Heart right ventricle (tissue), 16 donors: ENCODE measurements at regions of chr11 and their contacts with region 1.

Region 1: DNA sequence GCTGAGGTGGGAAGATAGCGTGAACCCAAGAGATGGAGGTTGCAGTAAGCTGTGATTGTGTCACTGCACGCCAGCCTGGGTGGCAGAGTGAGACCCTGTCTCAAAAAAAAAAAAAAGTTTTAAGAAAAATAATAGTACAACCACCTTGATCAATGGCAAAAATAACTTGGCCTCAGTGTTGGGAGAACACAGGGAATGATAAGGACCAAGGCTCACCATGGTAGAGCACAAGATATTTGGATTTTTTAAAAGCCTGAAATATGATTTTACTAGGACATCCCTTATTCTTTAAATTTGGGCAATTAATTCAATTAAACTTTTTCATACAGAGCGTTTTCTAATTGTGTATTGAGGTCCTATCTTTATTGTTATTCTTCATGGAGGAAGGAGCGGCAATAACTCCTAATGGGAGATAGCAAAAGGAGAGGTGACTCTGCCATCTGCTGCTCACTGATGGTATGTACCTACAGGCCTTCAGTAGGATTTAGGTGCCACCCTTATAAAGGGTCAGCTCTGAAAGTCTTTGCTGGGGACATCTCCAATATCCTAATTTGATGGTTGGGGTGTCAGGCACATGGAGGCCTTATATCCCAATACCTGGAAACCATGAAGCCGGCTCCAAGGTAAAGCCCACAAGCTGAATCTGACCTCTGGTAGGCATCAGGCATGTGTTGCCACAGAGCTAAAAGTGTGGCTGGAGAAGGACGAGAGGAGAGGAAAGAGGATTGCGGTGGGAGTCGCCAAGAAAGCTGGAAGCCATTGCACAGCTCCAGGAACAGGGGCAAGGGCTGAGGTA is 21.9 kb upstream of the POLD3 start:
- DNase-seq: peak in 1 of 2 donors; percentile 34
- ATAC-seq: peak in 7 of 8 donors; percentile 74 to 86 (median 78)
- H3K4me3 ChIP-seq: no peak overlapping the region
- H3K27ac ChIP-seq: no peak overlapping the region
- H3K4me1 ChIP-seq: no peaks in the 10 kb centered on the region
- H3K27me3 ChIP-seq: peaks cover 0 to 7% (median 0%) of the 10 kb centered on the region in 7 donors
- CTCF ChIP-seq: peak; percentile 51 to 78 (median 76)

Region 2: DNA sequence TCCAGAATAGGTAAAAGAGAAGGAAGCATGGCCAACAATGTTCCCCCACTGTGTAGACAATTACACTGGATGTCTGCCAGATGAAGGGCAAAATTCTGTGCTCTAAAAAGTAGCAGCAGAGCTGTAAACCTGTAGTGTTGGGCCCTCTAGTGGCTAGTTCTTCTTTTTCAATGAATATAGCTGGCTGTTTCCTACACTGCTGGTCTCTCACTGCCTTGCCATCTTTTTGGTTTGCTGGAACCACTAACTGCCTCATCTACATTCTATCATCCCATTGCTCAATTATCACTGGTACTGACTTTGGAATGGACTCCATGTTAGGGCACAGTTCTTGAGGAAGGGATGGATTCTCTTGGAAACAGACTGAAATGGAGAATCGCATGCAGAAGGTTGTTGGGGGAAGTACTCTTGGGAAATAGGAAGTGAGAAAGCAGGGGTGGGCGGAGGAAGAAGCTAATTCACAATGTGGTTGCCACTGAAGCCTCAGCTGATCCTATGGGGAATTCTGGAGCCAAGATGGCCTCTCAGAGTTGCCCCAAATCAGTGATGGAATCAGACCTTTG is 121.0 kb before region 1 on chr11:
- intact Hi-C with region 1: loop called (anchors 1 to 5 kb)
- DNase-seq: peak in 1 of 2 donors; percentile 77
- ATAC-seq: peak; percentile 74 to 91 (median 86)
- H3K4me3 ChIP-seq: no peak overlapping the region
- H3K27ac ChIP-seq: peak overlapping the region in 1 of 10 donors; percentile 49
- H3K4me1 ChIP-seq: peaks cover 0 to 19% (median 0%) of the 10 kb centered on the region in 9 donors
- H3K27me3 ChIP-seq: no peaks in the 10 kb centered on the region
- CTCF ChIP-seq: peak; percentile 51 to 80 (median 75)

Region 3: DNA sequence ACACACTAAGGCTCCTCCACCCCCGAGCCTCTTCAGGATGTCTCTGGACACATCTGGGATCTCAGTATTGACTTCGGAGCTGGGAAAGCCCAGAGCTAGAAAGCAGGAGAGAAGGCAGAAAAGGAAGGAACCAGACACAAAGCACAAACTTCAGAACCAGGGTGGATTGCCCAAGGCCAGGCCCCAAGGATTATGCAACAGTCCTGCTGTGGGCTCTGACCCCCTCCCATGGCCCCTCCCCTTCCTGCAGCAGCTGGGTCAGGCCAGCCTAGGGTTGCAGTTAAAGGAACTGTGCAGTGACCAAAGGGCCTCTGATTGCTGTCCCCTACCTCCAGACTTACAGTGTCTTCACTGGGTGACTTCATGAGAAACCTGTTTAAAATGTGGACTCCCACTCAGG is 108.5 kb before region 1 on chr11:
- intact Hi-C with region 1: loop called in 1 of 10 experiments (anchors 5 kb)
- DNase-seq: peak; percentile 70 to 74
- ATAC-seq: peak; percentile 86 to 94 (median 92)
- H3K4me3 ChIP-seq: peak overlapping the region in 7 of 10 donors; percentile 2 to 53 (median 33)
- H3K27ac ChIP-seq: peak overlapping the region in 8 of 10 donors; percentile 50 to 85 (median 62)
- H3K4me1 ChIP-seq: peaks cover 0 to 45% (median 11%) of the 10 kb centered on the region in 9 donors
- H3K27me3 ChIP-seq: no peaks in the 10 kb centered on the region
- CTCF ChIP-seq: no peak

Region 4: DNA sequence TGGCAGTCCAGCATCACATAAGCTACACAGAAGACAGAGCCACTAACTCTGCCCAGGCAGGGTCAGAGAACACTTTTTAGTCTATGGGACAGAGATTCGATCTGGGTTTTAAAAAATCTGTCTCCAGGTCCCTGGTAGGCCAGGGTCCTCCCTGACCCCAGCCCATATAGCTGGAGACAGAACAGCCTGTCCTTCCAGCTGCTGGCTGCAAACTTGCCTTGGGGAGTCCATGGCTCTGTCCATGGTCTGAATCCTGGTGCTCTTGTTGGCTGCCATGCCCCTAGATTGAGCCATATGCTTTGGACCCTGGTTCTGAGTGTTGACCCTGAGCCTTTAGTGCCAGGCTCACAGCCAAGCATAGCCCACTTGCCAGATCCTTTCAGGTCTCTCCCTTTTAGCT is 63.6 kb before region 1 on chr11:
- intact Hi-C with region 1: no loop called
- DNase-seq: no peak
- ATAC-seq: no peak
- H3K4me3 ChIP-seq: no peak overlapping the region
- H3K27ac ChIP-seq: no peak overlapping the region
- H3K4me1 ChIP-seq: no peaks in the 10 kb centered on the region
- H3K27me3 ChIP-seq: no peaks in the 10 kb centered on the region
- CTCF ChIP-seq: no peak

Region 5: GRCh38 chr11:74592441-74593362 is 22.2 kb after region 1 on chr11 and contains the start of gene POLD3:
- intact Hi-C with region 1: no loop called
- DNase-seq: peak; percentile 95 to 96
- ATAC-seq: peak; percentile 98 to 100 (median 99)
- H3K4me3 ChIP-seq: peak within 1 kb of the TSS; percentile 85 to 100 (median 94)
- H3K27ac ChIP-seq: peak within 1 kb of the TSS; percentile 68 to 96 (median 84)
- H3K4me1 ChIP-seq: peaks cover 0 to 21% (median 17%) of the 10 kb centered on the region in 9 donors
- H3K27me3 ChIP-seq: no peaks in the 10 kb centered on the region
- CTCF ChIP-seq: no peak
- total RNA-seq, gene POLD3: 5.2 to 8.8 (median 8.2) TPM